ENCODE measurements at regions of chr12 and their contacts with region 1.

Region 1: DNA sequence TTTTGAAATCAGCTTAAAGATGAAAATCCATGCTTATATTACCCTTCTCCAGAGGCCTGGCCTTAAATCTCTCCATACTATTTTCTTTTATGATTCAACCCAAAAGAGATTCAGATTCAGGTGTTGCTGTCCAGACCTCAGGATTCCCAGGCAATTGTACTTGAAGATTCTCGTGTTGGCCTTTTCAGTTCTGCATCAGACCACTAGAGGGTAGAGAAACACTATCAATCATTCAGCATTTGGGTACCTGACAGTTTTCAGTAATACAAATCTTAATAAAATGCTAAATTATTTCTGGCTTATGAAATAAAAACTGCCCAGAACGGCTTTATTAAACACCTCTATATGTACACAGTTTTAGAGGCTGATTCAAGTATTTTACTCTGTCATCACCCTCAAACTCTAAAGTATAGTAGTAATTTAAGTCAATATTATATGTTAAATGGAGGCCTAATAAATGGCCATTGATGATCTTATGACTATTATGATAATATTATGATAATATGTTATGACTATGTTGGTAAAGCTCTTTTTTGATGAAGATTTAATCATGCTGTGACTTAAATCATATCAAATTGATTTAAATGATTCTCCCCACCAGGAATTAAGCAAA is 301.1 kb downstream of the DUSP6 start:
- DNase-seq: no peak
- ATAC-seq: peak; percentile 67
- H3K4me3 Mint-ChIP-seq: no peak overlapping the region
- H3K27ac Mint-ChIP-seq: no peak overlapping the region
- H3K4me1 Mint-ChIP-seq: no peaks in the 10 kb centered on the region
- H3K27me3 Mint-ChIP-seq: no peaks in the 10 kb centered on the region
- CTCF ChIP-seq: no peak

Region 2: DNA sequence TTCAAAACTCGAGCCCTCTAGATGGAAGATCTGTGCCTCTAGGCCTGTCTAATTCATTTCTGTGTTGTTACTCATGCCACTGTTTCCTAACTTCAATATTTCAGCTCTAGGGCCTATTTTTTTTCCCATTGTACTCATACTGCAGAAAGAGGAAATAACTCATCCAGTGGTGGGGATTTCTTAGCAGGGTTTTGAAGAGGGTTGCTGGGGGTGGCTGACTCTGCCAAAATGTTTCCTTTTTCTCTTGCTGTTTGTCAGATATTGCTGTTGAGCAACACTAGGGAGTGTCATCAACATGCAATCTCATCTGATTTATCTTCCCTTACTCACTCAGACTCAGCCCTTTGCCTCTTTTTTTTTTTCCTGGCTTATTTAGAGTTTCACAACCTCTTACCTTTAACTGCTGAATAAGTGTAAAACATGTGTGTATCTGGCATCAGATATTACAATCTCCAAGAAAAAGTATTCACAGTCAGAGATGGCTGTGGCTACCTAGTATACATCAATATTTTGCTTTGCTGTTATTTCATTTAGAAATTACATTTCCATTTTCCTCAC is 111.6 kb after region 1 on chr12:
- CTCF ChIA-PET with region 1: no interaction called
- POLR2A ChIA-PET with region 1: no interaction called
- intact Hi-C with region 1: loop called (anchors 5 kb)
- DNase-seq: no peak
- ATAC-seq: peak; percentile 56
- H3K4me3 Mint-ChIP-seq: no peak overlapping the region
- H3K27ac Mint-ChIP-seq: no peak overlapping the region
- H3K4me1 Mint-ChIP-seq: peaks cover 28% of the 10 kb centered on the region
- H3K27me3 Mint-ChIP-seq: no peaks in the 10 kb centered on the region
- CTCF ChIP-seq: no peak

Region 3: DNA sequence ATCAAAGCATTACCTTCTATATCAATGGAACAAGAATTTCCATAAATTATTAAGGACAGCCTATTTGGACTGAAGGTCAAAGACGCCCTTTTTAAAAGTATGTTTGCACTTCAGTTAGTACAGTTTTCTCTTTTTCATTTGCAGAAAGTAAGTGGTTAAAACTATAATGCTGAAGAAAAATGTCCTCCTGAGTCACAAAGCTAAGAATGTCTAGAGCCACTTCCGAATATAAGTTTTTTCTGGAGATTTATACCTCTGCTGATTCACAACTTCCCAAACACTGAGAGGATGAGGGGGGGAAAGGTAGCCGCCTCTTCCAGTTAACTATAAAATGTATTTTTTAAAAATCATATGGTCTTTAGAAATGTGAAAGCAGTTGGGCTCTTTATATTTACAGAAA is 216.2 kb after region 1 on chr12:
- CTCF ChIA-PET with region 1: no interaction called
- POLR2A ChIA-PET with region 1: no interaction called
- intact Hi-C with region 1: loop called (anchors 5 kb)
- DNase-seq: no peak
- ATAC-seq: no peak
- H3K4me3 Mint-ChIP-seq: no peak overlapping the region
- H3K27ac Mint-ChIP-seq: no peak overlapping the region
- H3K4me1 Mint-ChIP-seq: peaks cover 5% of the 10 kb centered on the region
- H3K27me3 Mint-ChIP-seq: peaks cover 6% of the 10 kb centered on the region
- CTCF ChIP-seq: no peak

Region 4: DNA sequence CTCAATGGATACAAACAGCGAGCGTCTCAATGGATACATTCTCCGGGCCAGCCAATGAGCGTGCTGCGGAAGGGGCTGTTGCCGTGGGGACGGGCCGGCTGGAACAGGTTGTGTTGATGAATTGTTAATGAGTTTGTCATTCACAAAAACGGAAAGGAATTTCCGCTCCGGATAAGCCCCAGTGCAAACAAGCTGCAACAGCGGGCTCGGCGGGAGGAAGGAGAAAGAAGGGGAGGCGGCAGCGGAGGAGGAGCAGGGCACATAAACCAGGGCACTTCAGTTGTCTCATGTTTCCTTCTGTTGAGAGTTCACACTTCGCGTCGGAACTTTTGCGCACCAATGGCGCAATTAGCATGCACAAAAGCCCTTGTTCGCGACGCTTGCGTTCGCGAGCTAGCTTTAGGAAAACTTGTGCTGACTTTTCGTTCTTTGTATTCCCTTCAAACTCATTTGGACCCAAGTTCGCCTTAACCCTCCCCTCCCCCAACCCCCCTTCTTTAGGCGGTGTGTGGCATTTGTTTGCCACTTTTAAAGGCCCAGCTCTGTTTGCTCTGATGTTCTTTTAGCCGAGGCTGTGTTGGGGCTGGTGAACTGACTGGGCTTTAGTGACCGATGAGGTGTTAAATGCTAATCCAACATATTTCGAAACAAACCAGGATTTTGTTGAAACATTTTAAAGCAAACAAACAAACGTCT is 301.5 kb after region 1 on chr12 and contains the start of gene DUSP6:
- CTCF ChIA-PET with region 1: interaction called, 4 read pairs
- POLR2A ChIA-PET with region 1: no interaction called
- intact Hi-C with region 1: loop called (anchors 2 kb)
- DNase-seq: peak; percentile 62
- ATAC-seq: peak; percentile 61
- H3K4me3 Mint-ChIP-seq: peak within 1 kb of the TSS; percentile 84
- H3K27ac Mint-ChIP-seq: peak within 1 kb of the TSS; percentile 82
- H3K4me1 Mint-ChIP-seq: peaks cover 62% of the 10 kb centered on the region
- H3K27me3 Mint-ChIP-seq: no peaks in the 10 kb centered on the region
- CTCF ChIP-seq: no peak
- total RNA-seq, gene DUSP6: 1.6 and 1.8 TPM in 2 replicates

Region 5: GRCh38 chr12:89461649-89462612 is 410.8 kb after region 1 on chr12:
- CTCF ChIA-PET with region 1: interaction called, 30 read pairs
- POLR2A ChIA-PET with region 1: interaction called, 7 read pairs
- intact Hi-C with region 1: loop called (anchors 1 kb)
- DNase-seq: no peak
- ATAC-seq: peak; percentile 77
- H3K4me3 Mint-ChIP-seq: peak overlapping the region; percentile 41
- H3K27ac Mint-ChIP-seq: no peak overlapping the region
- H3K4me1 Mint-ChIP-seq: peaks cover 16% of the 10 kb centered on the region
- H3K27me3 Mint-ChIP-seq: no peaks in the 10 kb centered on the region
- CTCF ChIP-seq: peak; percentile 28

Region 6: DNA sequence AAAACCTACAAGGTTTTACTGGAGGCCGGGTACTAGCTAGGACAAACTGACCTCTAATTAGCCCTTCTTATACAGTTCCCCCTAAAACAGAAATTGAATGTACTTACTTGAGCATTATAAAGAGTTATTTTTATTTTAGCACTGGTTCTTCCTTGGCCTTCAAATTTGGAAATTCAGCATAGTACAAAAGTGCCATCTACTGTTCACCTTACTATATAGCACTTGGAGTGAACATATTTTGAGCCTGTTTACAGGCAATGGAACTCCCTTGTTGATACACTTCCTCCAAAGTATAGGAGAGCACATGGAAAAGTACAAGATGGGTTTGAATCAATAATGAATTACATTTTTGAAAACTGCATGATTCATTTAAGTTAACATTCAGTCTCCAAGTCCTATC is 478.6 kb after region 1 on chr12:
- CTCF ChIA-PET with region 1: interaction called, 3 read pairs
- POLR2A ChIA-PET with region 1: no interaction called
- intact Hi-C with region 1: loop called (anchors 1 kb)
- DNase-seq: no peak
- ATAC-seq: peak; percentile 18
- H3K4me3 Mint-ChIP-seq: no peak overlapping the region
- H3K27ac Mint-ChIP-seq: peak overlapping the region; percentile 9
- H3K4me1 Mint-ChIP-seq: peaks cover 21% of the 10 kb centered on the region
- H3K27me3 Mint-ChIP-seq: no peaks in the 10 kb centered on the region
- CTCF ChIP-seq: peak; percentile 15